AG04450 (cell line): ENCODE measurements at regions of chr9 and their contacts with region 1.

Region 1: DNA sequence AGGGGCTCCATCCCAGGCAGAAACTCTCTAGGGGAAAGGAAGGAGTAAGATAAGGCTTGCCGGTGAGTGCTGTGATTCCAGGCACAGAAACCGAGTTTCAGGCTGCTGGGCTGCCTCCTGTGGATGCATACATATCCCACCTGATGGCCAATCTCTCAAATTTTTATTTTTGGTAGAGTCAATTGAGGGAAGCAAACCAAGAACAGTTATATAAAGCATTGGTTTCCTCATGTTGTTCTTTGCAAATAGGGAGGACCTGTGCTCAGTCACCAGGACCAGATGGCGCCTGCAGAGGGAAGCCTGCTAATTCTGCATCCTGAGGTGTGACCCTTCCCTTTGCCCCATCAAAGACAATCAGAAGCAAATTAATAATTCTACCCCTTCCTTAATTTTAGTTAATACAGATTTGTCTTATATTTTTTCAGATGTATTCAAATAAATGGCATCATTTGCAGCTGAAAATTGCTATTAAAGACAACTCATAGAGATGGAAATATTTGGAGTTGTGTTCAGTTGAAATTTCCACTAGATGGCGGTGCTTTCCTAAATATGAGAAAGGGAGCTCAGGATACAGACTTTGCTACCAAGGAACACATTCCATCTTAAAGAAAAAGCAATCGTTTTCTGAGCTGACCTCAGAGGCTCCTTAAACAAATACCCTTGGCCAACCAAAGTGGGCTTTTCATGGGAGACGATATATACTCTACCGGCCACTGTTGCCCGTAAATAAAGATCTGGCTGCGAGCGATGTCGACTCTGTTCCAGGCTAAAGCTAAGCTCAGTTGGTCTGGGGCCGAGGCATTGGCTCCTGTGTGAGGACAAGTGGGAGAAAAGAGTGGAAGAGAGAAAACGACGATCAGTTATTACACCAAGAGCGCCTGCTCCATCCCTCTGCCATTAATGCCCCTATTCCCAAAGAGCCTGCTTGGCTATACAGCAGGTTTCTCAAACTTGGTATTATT is 225.7 kb upstream of the KLF9 start:
- DNase-seq: peak; percentile 18
- H3K4me3 ChIP-seq: no peak overlapping the region
- H3K27ac ChIP-seq: no peak overlapping the region
- H3K27me3 ChIP-seq: peaks cover 5% of the 10 kb centered on the region
- CTCF ChIP-seq: peak; percentile 69

Region 2: DNA sequence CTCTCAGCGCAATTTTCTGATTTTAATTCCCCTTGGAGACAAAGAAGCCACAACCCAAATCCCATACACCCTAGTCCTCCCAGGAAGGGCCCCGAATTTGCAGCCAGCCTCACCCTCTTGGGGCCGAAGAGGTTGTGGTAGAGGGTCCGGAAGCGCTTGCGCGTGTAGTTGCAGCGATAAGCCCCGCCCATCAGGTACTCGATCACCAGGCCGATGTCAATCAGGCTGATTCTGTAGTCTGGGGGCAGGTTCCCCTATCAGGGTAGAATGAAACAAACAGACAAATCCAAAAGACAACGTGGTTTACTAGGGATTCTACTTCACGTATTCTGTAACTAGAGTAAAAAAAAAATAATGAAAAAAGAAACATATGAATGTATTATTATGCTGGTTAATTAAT is 15.1 kb before region 1 on chr9:
- CTCF ChIA-PET with region 1: interaction called, 12 read pairs
- POLR2A ChIA-PET with region 1: no interaction called
- DNase-seq: no peak
- H3K4me3 ChIP-seq: no peak overlapping the region
- H3K27ac ChIP-seq: no peak overlapping the region
- H3K27me3 ChIP-seq: peaks cover 10% of the 10 kb centered on the region
- CTCF ChIP-seq: no peak

Region 3: GRCh38 chr9:70924895-70925547 is 284.9 kb after region 1 on chr9:
- CTCF ChIA-PET with region 1: interaction called, 13 read pairs
- POLR2A ChIA-PET with region 1: no interaction called
- DNase-seq: peak; percentile 47
- H3K4me3 ChIP-seq: no peak overlapping the region
- H3K27ac ChIP-seq: no peak overlapping the region
- H3K27me3 ChIP-seq: no peaks in the 10 kb centered on the region
- CTCF ChIP-seq: peak; percentile 88

Region 4: DNA sequence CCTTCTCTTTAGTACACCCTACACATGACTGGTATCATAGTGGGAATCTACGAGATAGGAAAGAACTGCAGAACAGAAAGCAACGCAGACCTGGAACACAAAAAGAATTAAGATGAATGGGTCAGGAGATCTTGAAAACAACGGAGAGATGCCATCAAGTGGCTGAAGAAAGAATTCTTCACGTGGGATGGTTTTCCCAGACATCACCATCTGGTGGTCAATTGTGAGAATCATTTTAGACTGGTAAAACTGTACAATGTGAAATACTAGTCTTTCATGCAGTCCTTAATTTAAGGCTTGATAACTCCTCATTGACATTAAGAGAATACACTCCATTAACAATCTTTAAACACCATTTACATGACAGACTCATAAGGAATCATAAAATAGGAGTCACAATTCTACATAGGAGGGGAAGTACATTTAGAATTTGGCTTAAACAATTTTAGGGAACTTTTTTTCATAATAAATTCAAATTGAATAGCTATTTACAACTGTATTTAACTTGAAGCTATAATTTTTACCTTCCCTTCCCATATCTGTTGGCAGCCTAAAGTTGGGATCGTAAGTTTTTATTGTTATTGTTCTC is 609.7 kb after region 1 on chr9:
- CTCF ChIA-PET with region 1: interaction called, 239 read pairs
- POLR2A ChIA-PET with region 1: no interaction called
- DNase-seq: peak; percentile 30
- H3K4me3 ChIP-seq: no peak overlapping the region
- H3K27ac ChIP-seq: no peak overlapping the region
- H3K27me3 ChIP-seq: no peaks in the 10 kb centered on the region
- CTCF ChIP-seq: peak; percentile 81